CD4-positive, alpha-beta memory T cell (primary cell): ENCODE measurements at regions of chr2 and their contacts with region 1.

Region 1: GRCh38 chr2:38709567-38710194 is 41.5 kb downstream of the SRSF7 start:
- DNase-seq: peak; percentile 81 to 87 (median 84)
- H3K4me3 ChIP-seq: peak overlapping the region in 1 of 2 donors; percentile 13
- H3K4me3 Mint-ChIP-seq: peak overlapping the region; percentile 33 to 90 (median 80)
- H3K27ac ChIP-seq: peak overlapping the region; percentile 46
- H3K27ac Mint-ChIP-seq: peak overlapping the region; percentile 92 to 98 (median 96)
- H3K4me1 ChIP-seq: peaks cover 84% of the 10 kb centered on the region
- H3K4me1 Mint-ChIP-seq: peaks cover 58 to 88% (median 74%) of the 10 kb centered on the region in 4 donors
- H3K27me3 ChIP-seq: no peaks in the 10 kb centered on the region
- H3K27me3 Mint-ChIP-seq: no peaks in the 10 kb centered on the region

Region 2: DNA sequence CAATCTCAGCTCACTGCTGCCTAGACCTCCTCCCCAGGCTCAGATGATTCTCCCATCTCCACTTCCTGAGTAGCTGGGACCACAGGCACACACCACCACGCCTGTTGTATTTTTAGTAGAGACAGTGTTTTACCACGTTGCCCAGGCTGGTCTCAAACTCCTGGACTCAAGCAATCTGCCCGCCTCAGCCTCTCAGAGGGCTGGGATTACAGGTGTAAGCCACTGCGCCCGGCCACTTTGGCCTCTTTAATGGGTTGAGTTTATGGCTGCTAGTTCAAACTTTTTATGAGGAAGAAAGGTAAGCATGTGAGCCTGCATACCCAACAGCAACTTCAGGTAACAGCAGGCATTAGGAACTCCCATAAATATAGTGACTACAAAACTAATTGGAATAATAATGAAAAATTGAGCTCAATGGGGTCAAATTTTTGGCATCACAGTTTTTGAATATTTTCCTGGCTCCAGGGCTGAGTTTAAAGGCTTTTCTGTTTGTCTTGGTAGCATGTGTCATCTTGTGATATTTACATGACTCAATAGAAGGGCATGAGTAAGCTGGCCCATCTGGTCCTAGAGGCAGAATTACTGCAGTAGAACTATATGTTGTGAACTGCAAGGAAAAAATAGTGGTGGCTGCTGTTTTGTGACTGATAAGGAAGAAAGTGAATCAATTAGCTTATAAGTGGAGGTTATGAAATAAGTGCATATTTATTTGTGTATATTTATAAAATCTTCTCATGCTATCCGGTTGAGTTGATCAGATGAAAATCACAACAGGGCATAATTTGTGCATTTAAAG is 19.0 kb before region 1 on chr2:
- CTCF ChIA-PET with region 1: interaction called, 9 read pairs
- POLR2A ChIA-PET with region 1: interaction called, 12 read pairs
- intact Hi-C with region 1: loop called (anchors 2 kb)
- DNase-seq: no peak
- H3K4me3 ChIP-seq: no peak overlapping the region
- H3K4me3 Mint-ChIP-seq: peak overlapping the region in 6 of 8 donors; percentile 46 to 68 (median 60)
- H3K27ac ChIP-seq: no peak overlapping the region
- H3K27ac Mint-ChIP-seq: peak overlapping the region; percentile 44 to 89 (median 82)
- H3K4me1 ChIP-seq: peaks cover 69% of the 10 kb centered on the region
- H3K4me1 Mint-ChIP-seq: peaks cover 44 to 76% (median 59%) of the 10 kb centered on the region in 4 donors
- H3K27me3 ChIP-seq: no peaks in the 10 kb centered on the region
- H3K27me3 Mint-ChIP-seq: no peaks in the 10 kb centered on the region

Region 3: GRCh38 chr2:38697125-38697840 is 12.4 kb before region 1 on chr2:
- CTCF ChIA-PET with region 1: interaction called, 15 read pairs
- POLR2A ChIA-PET with region 1: interaction called, 43 read pairs
- intact Hi-C with region 1: loop called (anchors 1 kb)
- DNase-seq: peak; percentile 74 to 87 (median 75)
- H3K4me3 ChIP-seq: peak overlapping the region in 1 of 2 donors; percentile 0
- H3K4me3 Mint-ChIP-seq: peak overlapping the region; percentile 43 to 81 (median 76)
- H3K27ac ChIP-seq: peak overlapping the region; percentile 72
- H3K27ac Mint-ChIP-seq: peak overlapping the region; percentile 93 to 98 (median 97)
- H3K4me1 ChIP-seq: peaks cover 100% of the 10 kb centered on the region
- H3K4me1 Mint-ChIP-seq: peaks cover 52 to 92% (median 74%) of the 10 kb centered on the region in 4 donors
- H3K27me3 ChIP-seq: no peaks in the 10 kb centered on the region
- H3K27me3 Mint-ChIP-seq: no peaks in the 10 kb centered on the region

Region 4: DNA sequence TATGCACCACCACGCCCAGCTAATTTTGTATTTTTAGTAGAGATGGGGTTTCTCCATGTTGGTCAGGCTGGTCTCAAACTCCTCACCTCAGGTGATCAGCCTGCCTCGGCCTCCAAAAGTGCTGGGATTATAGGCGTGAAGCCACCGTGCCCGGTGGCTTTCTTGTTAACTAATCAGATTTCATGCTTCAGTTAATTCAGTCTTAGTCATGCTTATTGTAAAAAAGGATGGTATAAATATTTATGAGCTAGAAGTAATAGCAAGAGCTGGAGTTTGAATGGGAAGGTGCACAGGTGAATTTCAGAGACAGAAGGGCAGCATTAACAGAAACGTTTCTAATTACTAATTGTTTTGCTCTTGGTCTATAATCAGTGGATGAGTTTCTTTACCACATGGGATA is 78.6 kb after region 1 on chr2:
- CTCF ChIA-PET with region 1: no interaction called
- POLR2A ChIA-PET with region 1: no interaction called
- intact Hi-C with region 1: no loop called
- DNase-seq: no peak
- H3K4me3 ChIP-seq: no peak overlapping the region
- H3K4me3 Mint-ChIP-seq: no peak overlapping the region
- H3K27ac ChIP-seq: no peak overlapping the region
- H3K27ac Mint-ChIP-seq: no peak overlapping the region
- H3K4me1 ChIP-seq: no peaks in the 10 kb centered on the region
- H3K4me1 Mint-ChIP-seq: no peaks in the 10 kb centered on the region
- H3K27me3 ChIP-seq: no peaks in the 10 kb centered on the region
- H3K27me3 Mint-ChIP-seq: no peaks in the 10 kb centered on the region